Activated CD4-positive, alpha-beta memory T cell treated with anti-CD3 and anti-CD28 coated beads for 36 hours (primary cell): ENCODE measurements at regions of chr7 and their contacts with region 1.

Region 1: GRCh38 chr7:99472561-99473243 is at the start of gene ZNF789:
- DNase-seq: peak; percentile 99
- H3K4me3 Mint-ChIP-seq: peak within 1 kb of the TSS; percentile 100
- H3K27ac Mint-ChIP-seq: peak within 1 kb of the TSS; percentile 88
- H3K4me1 Mint-ChIP-seq: peaks cover 33% of the 10 kb centered on the region
- H3K27me3 Mint-ChIP-seq: no peaks in the 10 kb centered on the region
- total RNA-seq, gene ZNF789: 14.2 to 15.6 TPM

Region 2: DNA sequence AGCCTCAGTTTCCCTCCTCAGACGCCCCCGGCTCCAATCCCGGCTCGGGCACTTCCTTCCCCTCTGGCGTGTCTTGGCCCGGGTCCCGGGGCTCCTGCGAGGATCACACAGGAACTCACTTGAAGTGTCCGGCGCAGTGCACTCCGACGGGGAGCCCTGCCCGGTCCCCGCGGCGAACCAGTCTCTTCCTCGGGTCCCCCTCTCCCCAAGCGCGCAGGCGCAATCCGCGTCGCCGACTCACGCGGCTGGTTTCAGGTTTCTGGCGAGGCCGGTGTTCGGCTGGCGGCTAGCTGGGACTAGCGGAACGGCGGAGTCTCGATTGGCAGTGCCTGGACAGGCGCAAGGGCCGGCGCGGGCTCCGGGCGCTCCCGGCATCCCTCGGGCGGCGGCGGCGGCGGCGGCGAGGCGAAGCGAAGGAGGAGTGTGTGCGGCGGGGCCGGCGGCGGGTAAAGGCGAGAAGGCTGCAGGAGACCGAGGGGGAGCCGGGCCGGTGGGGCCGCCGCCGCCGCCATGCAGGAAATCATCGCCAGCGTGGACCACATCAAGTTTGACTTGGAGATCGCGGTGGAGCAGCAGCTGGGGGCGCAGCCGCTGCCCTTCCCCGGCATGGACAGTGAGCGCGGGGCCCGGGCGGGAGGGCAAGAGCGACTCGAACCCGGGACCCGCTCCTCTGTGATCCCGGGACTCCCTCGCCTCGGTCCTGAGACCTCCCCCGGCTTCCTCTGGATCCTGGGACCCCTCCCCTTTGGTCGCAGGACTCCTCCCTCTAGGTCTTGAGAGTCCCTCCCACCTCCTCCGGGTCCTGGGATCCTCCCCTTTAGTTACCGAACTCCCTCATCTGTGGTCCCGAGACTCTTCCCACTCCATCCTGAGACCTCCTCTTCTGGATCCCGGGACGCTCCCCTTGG is 33.9 kb before region 1 on chr7 and contains the starts of genes CPSF4 and PTCD1:
- CTCF ChIA-PET with region 1: no interaction called
- POLR2A ChIA-PET with region 1: no interaction called
- intact Hi-C with region 1: loop called (anchors 2 kb)
- DNase-seq: peak; percentile 96
- H3K4me3 Mint-ChIP-seq: peak within 1 kb of the TSS; percentile 99
- H3K27ac Mint-ChIP-seq: peak within 1 kb of the TSS; percentile 95
- H3K4me1 Mint-ChIP-seq: peaks cover 35% of the 10 kb centered on the region
- H3K27me3 Mint-ChIP-seq: no peaks in the 10 kb centered on the region
- total RNA-seq, gene CPSF4: 57.7 to 60.3 TPM
- total RNA-seq, gene PTCD1: 7.4 TPM

Region 3: DNA sequence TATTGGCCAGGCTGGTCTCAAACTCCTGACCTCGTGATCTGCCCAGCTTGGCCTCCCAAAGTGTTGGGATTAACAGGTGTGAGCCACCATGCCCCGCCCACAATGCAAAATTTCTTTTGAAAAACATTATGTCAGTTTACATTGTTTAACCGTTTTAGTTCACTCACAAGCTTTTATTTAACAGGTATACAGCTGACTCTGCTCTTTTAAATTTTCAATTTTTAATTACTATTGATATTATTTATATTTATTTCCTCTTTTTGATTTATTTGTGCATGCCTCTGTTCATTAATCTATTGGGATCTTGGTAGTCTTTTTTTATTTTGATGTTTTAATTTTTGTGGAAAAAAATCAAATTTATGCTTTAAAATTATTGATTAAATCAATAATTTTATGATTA is 48.7 kb after region 1 on chr7:
- CTCF ChIA-PET with region 1: no interaction called
- POLR2A ChIA-PET with region 1: no interaction called
- intact Hi-C with region 1: no loop called
- DNase-seq: no peak
- H3K4me3 Mint-ChIP-seq: no peak overlapping the region
- H3K27ac Mint-ChIP-seq: no peak overlapping the region
- H3K4me1 Mint-ChIP-seq: no peaks in the 10 kb centered on the region
- H3K27me3 Mint-ChIP-seq: no peaks in the 10 kb centered on the region

Region 4: GRCh38 chr7:99616359-99617191 is 143.9 kb after region 1 on chr7 and contains the start of gene ZSCAN25:
- CTCF ChIA-PET with region 1: no interaction called
- POLR2A ChIA-PET with region 1: no interaction called
- intact Hi-C with region 1: loop called (anchors 1 kb)
- DNase-seq: peak; percentile 91
- H3K4me3 Mint-ChIP-seq: peak within 1 kb of the TSS; percentile 95
- H3K27ac Mint-ChIP-seq: peak within 1 kb of the TSS; percentile 92
- H3K4me1 Mint-ChIP-seq: peaks cover 43% of the 10 kb centered on the region
- H3K27me3 Mint-ChIP-seq: no peaks in the 10 kb centered on the region
- total RNA-seq, gene ZSCAN25: 15.9 to 20.3 TPM